Right ventricle myocardium superior (tissue), 1 donor: ENCODE measurements at regions of chr18 and their contacts with region 1.

Region 1: DNA sequence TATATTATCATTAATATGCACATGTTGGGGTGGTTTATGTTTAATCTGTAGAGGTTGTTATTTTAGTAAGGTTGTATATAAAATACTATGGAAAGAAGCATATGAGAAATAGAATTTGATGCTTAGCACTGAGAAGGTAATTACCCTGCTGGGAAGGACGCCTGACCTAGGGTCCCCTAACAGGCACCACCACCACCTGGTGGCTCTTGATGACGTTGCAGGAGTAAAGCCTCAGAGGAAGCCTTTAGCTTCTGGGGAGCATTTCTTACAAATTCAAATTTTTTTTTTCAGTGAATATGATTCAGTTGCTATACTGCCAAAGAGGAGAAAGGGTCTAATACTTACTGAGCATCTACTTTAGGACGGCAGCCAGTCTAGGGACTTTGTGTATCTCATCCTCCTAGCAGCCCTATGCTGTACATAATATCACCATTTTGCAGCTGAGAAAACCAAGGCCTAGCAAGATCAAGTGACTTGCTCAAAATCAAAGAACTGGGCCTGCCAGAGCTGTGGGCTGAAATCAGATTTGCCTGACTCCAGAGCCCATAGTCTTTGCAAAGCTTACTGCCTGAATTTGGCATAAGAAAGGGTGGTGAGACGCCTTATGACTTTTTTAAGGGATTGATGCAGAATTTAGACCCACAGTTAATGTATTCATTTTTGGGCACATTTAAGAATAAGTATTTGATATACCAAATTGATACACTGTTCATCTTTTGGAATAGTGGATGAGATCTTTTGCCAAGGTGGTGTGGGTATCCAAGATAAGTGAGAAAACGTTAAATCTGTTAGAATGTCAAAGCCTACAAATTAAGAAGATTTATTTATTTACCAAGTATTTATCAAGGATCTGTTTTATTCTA is 78.8 kb upstream of the GAREM1 start:
- DNase-seq: peak; percentile 46
- ATAC-seq: peak; percentile 74

Region 2: GRCh38 chr18:32158108-32158624 is 391.3 kb before region 1 on chr18:
- intact Hi-C with region 1: loop called (anchors 2 kb)
- DNase-seq: peak; percentile 80
- ATAC-seq: peak; percentile 100

Region 3: DNA sequence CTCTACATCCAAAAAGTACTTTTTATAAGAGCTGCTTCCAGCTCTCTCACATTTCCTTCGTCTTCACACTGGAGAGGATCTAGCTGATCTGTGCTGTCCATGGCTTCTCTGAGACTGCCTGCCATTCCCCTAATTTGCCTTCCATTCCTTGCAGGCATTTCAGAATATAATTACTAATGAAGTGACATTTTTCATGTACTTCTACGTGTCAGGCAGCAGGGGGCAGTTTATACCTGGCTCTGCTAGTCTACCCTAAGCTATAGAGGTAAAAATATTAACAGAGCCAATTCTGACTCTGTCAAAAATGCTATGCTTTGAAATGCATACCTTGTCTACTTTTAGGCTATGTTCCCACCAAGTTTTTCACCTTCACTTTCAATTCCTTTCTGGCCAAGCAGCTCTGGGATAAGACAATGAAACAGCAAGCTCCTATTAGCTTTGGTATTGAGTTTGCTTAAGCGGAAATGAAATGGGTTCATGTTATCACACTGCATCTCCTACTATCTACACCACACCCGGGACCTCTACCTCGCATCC is 277.7 kb before region 1 on chr18:
- intact Hi-C with region 1: loop called (anchors 2 kb)
- DNase-seq: no peak
- ATAC-seq: peak; percentile 84

Region 4: GRCh38 chr18:32695534-32695933 is 146.1 kb after region 1 on chr18:
- intact Hi-C with region 1: no loop called
- DNase-seq: no peak
- ATAC-seq: no peak